ENCODE measurements at regions of chr7 and their contacts with region 1.

Region 1: DNA sequence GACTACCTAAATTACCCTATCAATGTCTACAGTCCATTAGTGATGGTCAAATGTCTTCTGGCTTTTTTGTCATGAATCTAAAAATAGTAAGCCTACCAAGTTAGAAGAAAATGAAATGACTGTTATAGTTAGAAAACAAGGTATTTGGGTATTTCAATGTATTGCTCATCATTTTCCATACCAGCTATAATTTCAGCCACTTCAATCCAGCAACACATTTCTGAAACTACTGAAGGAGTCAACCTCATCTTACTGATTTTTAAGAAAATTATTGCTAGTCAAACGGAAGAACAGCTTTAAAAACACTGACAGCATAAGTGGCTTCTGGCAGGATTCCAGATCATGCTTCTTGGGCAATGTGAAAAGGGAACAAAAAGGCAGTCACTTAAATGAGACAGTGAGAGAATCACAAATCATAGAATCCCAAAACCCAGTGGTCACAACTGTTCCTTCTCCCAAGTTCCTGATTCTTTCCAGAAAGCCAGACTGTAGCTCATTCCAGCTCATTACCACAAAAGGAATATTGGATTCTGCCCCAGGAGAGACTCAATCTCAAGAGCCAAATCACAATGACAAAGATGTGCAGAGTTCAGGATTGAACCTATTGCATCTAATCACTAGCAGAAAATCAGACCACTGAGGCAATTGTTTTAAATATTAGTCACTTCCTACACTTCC is 61.2 kb upstream of the LRRN3 start:
- DNase-seq: no peak
- H3K4me3 Mint-ChIP-seq: peak overlapping the region; percentile 63
- H3K27ac Mint-ChIP-seq: peak overlapping the region; percentile 88
- H3K4me1 Mint-ChIP-seq: peaks cover 53% of the 10 kb centered on the region
- H3K27me3 Mint-ChIP-seq: no peaks in the 10 kb centered on the region

Region 2: GRCh38 chr7:110347081-110347480 is 682.6 kb before region 1 on chr7:
- intact Hi-C with region 1: no loop called
- DNase-seq: no peak
- H3K4me3 Mint-ChIP-seq: no peak overlapping the region
- H3K27ac Mint-ChIP-seq: no peak overlapping the region
- H3K4me1 Mint-ChIP-seq: no peaks in the 10 kb centered on the region
- H3K27me3 Mint-ChIP-seq: no peaks in the 10 kb centered on the region

Region 3: DNA sequence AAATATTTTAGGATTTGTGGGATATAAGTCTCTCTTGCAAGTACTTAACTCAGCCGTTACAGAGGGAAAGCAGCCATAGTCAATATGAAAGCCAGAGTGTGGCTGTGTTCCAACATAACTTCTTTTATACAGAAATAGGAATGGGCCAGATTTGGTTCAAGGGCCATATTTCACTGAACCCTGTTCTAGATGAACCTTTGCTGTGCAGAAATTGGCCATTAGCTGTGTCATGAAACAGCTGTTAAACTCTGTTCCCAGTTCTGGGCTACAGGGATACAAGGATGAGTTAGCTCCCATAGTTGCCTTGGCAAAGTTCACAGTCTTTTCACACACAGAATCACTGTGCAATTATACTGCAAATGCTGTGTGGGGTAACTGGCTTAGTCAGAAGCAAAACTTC is 152.7 kb before region 1 on chr7:
- intact Hi-C with region 1: no loop called
- DNase-seq: no peak
- H3K4me3 Mint-ChIP-seq: no peak overlapping the region
- H3K27ac Mint-ChIP-seq: no peak overlapping the region
- H3K4me1 Mint-ChIP-seq: peaks cover 7% of the 10 kb centered on the region
- H3K27me3 Mint-ChIP-seq: no peaks in the 10 kb centered on the region

Region 4: GRCh38 chr7:110909117-110909516 is 120.6 kb before region 1 on chr7:
- intact Hi-C with region 1: loop called (anchors 5 kb)
- DNase-seq: no peak
- H3K4me3 Mint-ChIP-seq: no peak overlapping the region
- H3K27ac Mint-ChIP-seq: no peak overlapping the region
- H3K4me1 Mint-ChIP-seq: peaks cover 44% of the 10 kb centered on the region
- H3K27me3 Mint-ChIP-seq: no peaks in the 10 kb centered on the region

Region 5: GRCh38 chr7:111012799-111013675 is 16.7 kb before region 1 on chr7:
- intact Hi-C with region 1: loop called (anchors 1 kb)
- DNase-seq: peak; percentile 57
- H3K4me3 Mint-ChIP-seq: peak overlapping the region; percentile 52
- H3K27ac Mint-ChIP-seq: peak overlapping the region; percentile 82
- H3K4me1 Mint-ChIP-seq: peaks cover 65% of the 10 kb centered on the region
- H3K27me3 Mint-ChIP-seq: no peaks in the 10 kb centered on the region

Region 6: DNA sequence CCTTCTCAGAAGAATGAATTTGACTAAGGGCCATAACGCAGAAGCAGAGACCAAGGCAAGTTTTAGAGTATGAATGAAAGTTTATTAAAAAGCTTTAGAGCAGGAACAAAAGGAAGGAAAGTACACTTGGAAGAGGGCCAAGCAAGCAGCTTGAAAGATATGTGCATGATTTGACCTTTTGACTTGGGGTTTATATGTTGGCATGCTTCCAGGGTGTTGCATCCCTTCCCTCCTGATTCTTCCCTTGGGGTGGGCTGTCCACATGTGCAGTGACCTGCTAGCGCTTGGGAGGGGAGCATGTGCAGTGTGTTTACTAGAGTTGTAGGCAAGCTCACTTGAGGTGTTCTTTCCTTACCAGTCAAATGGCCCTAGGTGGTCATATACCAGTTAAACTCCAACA is 23.3 kb after region 1 on chr7:
- intact Hi-C with region 1: no loop called
- DNase-seq: no peak
- H3K4me3 Mint-ChIP-seq: no peak overlapping the region
- H3K27ac Mint-ChIP-seq: no peak overlapping the region
- H3K4me1 Mint-ChIP-seq: peaks cover 23% of the 10 kb centered on the region
- H3K27me3 Mint-ChIP-seq: no peaks in the 10 kb centered on the region

Region 7: DNA sequence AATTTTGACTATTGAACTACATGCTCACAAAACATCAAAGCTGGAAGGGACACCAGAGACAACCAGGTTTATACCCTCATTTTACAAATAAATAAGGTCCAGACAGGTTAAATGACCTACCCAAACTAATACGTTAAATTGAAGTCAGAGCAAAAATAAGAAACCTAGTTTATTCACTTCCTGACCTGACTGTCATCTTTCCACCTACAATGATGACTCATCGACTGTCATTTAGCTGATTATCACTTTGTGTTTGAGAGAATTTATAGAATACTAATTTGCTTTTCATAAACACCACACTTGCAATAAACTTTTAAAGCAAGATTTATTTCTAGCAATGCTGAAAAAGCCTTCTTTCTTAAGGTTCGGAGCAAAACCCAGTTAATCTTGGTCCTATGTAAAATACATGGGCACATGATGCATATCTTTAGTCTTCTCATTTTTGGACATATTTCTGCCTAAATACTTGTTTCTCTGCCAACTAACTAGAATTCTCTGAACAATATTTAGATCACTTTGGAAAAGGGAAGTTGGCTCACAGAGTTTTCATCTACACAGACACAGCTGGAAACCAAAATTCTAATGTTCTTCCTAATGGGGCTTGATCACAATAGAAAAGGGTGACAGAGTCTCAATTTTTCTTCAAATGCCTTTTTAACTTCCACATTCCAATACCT is 44.5 kb after region 1 on chr7:
- intact Hi-C with region 1: loop called (anchors 1 kb)
- DNase-seq: no peak
- H3K4me3 Mint-ChIP-seq: peak overlapping the region; percentile 19
- H3K27ac Mint-ChIP-seq: peak overlapping the region; percentile 84
- H3K4me1 Mint-ChIP-seq: peaks cover 59% of the 10 kb centered on the region
- H3K27me3 Mint-ChIP-seq: no peaks in the 10 kb centered on the region

Region 8: GRCh38 chr7:111138196-111138569 is 108.5 kb after region 1 on chr7:
- intact Hi-C with region 1: loop called (anchors 1 kb)
- DNase-seq: peak; percentile 57
- H3K4me3 Mint-ChIP-seq: peak overlapping the region; percentile 57
- H3K27ac Mint-ChIP-seq: peak overlapping the region; percentile 93
- H3K4me1 Mint-ChIP-seq: peaks cover 32% of the 10 kb centered on the region
- H3K27me3 Mint-ChIP-seq: no peaks in the 10 kb centered on the region

Region 9: DNA sequence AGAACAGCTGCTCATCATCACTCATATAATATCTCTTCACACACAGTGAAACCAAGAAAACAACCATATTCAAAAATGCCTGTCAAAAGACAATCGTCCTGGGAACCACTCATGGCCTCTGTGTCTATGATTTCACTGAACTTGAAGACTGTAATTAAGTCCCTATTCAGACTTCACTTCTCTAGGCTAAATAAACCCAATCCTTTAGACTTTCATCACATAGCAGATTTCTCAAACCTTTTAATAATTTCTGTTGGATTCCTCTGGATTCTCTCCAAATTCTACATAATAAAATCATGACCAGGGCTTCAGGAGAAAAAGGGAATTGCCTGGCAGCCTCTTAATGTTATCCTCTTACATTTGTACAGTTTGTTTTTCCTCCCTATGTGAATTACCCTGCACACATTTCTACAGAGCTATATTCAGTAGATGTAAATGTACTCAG is 262.3 kb after region 1 on chr7:
- intact Hi-C with region 1: no loop called
- DNase-seq: no peak
- H3K4me3 Mint-ChIP-seq: no peak overlapping the region
- H3K27ac Mint-ChIP-seq: no peak overlapping the region
- H3K4me1 Mint-ChIP-seq: peaks cover 4% of the 10 kb centered on the region
- H3K27me3 Mint-ChIP-seq: no peaks in the 10 kb centered on the region

Region 10: GRCh38 chr7:111561885-111562732 is 532.4 kb after region 1 on chr7 and contains the start of gene IMMP2L:
- intact Hi-C with region 1: loop called (anchors 1 kb)
- DNase-seq: peak; percentile 89
- H3K4me3 Mint-ChIP-seq: peak within 1 kb of the TSS; percentile 87
- H3K27ac Mint-ChIP-seq: peak within 1 kb of the TSS; percentile 85
- H3K4me1 Mint-ChIP-seq: peaks cover 31% of the 10 kb centered on the region
- H3K27me3 Mint-ChIP-seq: peaks cover 9% of the 10 kb centered on the region
- total RNA-seq, gene IMMP2L: 12.4 and 20.0 TPM in 2 replicates